ENCODE measurements at regions of chr16 and their contacts with region 1.

Region 1: DNA sequence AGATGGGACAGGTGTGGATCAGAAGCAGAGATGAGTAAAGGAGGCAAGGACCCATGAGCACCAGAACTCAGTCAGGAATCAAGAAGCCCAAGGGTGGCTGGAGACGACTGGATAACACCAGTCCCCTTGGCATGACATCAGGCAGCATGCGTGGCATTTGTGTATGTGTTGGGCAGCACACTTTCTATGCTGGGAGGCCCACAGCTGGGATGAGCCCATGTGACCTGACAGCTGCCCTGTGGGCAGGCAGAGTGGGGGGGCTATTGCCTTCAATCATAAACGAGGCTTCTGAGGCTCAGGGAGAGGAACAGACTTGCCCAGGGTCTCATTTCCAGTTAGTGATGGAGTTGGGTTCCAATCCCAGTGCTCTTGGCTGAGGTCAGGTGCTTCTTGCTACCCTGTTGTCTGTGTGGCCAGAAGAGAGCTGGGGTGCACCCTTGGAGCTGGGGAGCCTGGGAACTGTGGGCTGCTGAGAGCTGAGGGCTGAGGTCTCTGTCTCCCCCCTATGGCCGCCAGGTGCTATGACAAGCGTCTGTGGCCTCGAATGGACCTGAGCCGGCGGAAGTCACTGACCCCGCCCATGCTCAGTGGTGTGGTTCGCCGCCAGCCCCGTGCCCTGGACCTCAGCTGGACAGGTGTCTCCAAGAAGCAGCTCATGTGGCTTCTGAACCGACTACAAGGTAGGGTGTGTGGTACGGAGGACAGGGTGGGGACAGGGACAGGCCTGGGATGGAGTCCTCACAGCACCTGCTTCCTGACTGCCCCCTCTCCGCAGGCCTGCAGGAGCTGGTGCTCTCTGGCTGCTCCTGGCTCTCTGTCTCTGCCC is 7.1 kb upstream of the ORAI3 start:
- DNase-seq: peak; percentile 74
- H3K4me3 ChIP-seq: no peak overlapping the region
- H3K27ac ChIP-seq: no peak overlapping the region
- H3K4me1 ChIP-seq: peaks cover 13% of the 10 kb centered on the region
- CTCF ChIP-seq: peak; percentile 92

Region 2: GRCh38 chr16:30874821-30875717 is 66.7 kb before region 1 on chr16:
- CTCF ChIA-PET with region 1: no interaction called
- POLR2A ChIA-PET with region 1: interaction called, 10 read pairs
- intact Hi-C with region 1: no loop called
- DNase-seq: peak; percentile 95
- H3K4me3 ChIP-seq: peak overlapping the region; percentile 89
- H3K27ac ChIP-seq: peak overlapping the region; percentile 78
- H3K4me1 ChIP-seq: peaks cover 34% of the 10 kb centered on the region
- CTCF ChIP-seq: 0 out of 2 replicates have a peak, but pooled peaks have one; percentile 27

Region 3: DNA sequence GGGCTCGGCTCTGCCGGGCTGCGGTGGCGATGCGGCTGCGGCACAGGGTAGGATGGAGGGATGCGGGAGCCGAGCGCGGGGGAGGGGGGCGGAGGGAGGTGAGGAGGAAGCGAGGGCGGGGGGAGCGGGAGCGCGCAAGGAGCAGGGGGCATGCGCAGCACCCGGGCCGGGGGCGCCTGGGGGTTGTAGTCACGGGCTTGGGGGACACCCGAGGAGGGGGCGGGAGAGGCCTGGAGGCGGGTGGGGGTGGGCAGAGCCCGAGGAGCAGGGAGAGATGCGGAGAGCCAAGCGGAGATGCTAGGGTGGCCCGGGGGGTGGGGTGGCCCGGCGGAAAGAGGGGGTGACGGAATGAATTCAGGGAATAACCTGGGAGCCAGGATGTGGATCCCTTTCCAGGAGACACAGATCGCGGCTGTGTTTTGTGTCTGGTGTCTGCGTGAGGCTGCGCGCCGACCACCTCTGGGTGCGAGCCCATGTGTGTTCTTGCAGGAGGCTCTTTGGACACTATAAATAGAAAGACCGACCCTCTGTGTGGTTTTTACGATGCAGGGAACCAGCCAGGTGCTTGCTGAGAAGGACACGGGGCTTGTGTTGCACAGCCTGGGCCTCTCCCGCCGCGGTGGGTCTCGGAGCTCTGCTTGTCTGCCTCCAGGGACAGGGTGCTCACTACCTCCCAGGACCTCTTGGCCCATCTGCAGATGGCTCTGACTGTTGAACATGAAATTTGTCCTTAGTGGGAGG is 68.9 kb after region 1 on chr16 and contains the start of gene STX1B:
- CTCF ChIA-PET with region 1: no interaction called
- POLR2A ChIA-PET with region 1: no interaction called
- intact Hi-C with region 1: no loop called
- DNase-seq: no peak
- H3K4me3 ChIP-seq: no peak within 1 kb of the TSS
- H3K27ac ChIP-seq: no peak within 1 kb of the TSS
- H3K4me1 ChIP-seq: no peaks in the 10 kb centered on the region
- CTCF ChIP-seq: no peak
- total RNA-seq, gene STX1B: 0.47 TPM in 1 of 2 replicates, not detected in the other

Region 4: DNA sequence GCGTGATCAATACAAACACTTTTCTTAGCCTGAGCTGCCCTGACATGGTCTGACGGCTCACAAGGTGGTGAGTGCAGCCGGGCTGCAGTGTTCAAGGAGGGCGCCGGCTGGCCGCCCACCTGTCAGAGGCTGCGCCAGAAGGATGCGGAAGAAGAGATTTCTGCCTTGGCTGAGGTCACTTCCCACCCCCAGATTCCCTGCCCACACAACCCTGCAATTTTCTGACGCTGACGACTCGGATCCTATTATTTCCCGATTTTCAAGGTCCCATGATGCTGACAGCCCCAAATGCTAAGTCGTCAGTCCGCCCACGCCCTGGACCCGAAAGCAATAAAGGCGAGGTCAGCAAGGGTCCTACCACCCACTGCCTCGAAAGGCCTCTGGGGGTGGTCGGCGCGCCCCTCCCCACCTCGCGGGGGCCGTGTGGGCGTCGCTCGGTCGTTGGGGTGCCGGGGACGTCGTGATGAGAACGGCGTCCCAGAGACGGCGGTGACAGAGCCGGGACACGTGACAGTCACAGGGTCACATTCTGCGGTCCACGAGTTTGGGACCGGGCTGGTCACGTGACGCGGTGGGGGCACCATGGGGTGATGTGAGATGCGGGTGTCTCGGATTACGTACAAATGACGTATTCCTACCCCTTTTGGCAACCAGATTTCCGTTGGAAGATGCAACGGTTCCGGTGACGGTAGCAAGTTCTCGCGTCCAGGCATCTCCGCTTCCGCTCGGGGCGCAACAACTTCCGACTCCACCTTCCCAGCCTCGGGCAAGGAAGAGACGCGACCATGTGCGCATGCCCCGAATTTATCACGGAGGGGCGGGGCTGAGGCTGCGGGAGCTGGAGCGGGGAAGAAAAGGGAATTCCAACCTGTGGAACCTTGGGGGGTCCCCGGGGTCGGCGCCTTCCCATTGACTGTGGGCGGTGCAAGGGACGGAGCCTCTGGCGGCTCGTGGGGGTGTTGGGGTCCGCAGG is 91.2 kb after region 1 on chr16 and contains the start of gene STX4:
- CTCF ChIA-PET with region 1: no interaction called
- POLR2A ChIA-PET with region 1: no interaction called
- intact Hi-C with region 1: no loop called
- DNase-seq: peak; percentile 95
- H3K4me3 ChIP-seq: peak within 1 kb of the TSS; percentile 98
- H3K27ac ChIP-seq: peak within 1 kb of the TSS; percentile 59
- H3K4me1 ChIP-seq: peaks cover 18% of the 10 kb centered on the region
- CTCF ChIP-seq: no peak
- total RNA-seq, gene STX4: 14.6 and 16.6 TPM in 2 replicates